Panc1 (cell line): ENCODE measurements at regions of chr20 and their contacts with region 1.

Region 1: GRCh38 chr20:29741894-29742698 is 1515.4 kb upstream of the DEFB115 start:
- DNase-seq: no peak
- ATAC-seq: no peak
- H3K4me3 ChIP-seq: no peak overlapping the region
- H3K27ac ChIP-seq: no peak overlapping the region
- H3K4me1 ChIP-seq: no peaks in the 10 kb centered on the region
- H3K27me3 ChIP-seq: no peaks in the 10 kb centered on the region
- CTCF ChIP-seq: no peak

Region 2: DNA sequence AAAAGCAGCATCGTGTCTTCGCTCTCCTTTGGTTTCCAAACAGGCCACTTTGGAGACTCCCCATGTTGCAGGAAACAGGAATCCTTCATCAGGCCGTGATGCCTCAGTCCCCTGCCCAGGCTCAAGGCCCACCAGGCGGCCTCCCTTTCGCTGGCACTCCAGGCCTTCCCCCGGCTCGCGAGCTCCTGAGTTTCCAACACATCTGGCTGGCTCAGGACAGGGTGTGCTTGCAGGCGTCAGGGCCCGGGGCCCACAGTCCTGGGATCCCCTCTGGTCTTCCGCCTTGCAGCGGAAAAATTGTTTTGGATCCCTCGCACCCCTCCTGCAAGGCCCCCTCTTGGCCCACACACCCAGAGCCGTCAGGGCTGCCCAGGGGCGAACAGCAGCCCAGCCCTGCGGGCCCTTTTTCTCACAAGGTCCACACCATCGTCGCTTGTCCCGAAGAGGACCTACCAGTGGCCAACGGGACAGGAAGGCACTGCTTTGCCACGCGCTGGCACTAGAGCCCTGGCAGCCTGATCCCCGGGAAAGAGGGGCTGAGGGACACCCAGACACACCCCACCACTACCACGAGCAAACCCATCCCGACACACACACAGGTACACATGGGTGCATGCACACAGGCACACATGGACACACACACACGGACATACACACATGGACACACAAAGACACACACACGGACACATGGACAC is 415.6 kb before region 1 on chr20:
- CTCF ChIA-PET with region 1: interaction called, 10 read pairs
- POLR2A ChIA-PET with region 1: no interaction called
- in situ Hi-C with region 1: no loop called
- intact Hi-C with region 1: no loop called
- DNase-seq: no peak
- ATAC-seq: 0 out of 2 replicates have a peak, but pooled peaks have one; percentile 70
- H3K4me3 ChIP-seq: no peak overlapping the region
- H3K27ac ChIP-seq: no peak overlapping the region
- H3K4me1 ChIP-seq: no peaks in the 10 kb centered on the region
- H3K27me3 ChIP-seq: no peaks in the 10 kb centered on the region
- CTCF ChIP-seq: no peak

Region 3: GRCh38 chr20:29472606-29473005 is 269.5 kb before region 1 on chr20:
- CTCF ChIA-PET with region 1: no interaction called
- POLR2A ChIA-PET with region 1: no interaction called
- in situ Hi-C with region 1: no loop called
- intact Hi-C with region 1: no loop called
- DNase-seq: no peak
- ATAC-seq: no peak
- H3K4me3 ChIP-seq: no peak overlapping the region
- H3K27ac ChIP-seq: no peak overlapping the region
- H3K4me1 ChIP-seq: no peaks in the 10 kb centered on the region
- H3K27me3 ChIP-seq: no peaks in the 10 kb centered on the region
- CTCF ChIP-seq: no peak

Region 4: DNA sequence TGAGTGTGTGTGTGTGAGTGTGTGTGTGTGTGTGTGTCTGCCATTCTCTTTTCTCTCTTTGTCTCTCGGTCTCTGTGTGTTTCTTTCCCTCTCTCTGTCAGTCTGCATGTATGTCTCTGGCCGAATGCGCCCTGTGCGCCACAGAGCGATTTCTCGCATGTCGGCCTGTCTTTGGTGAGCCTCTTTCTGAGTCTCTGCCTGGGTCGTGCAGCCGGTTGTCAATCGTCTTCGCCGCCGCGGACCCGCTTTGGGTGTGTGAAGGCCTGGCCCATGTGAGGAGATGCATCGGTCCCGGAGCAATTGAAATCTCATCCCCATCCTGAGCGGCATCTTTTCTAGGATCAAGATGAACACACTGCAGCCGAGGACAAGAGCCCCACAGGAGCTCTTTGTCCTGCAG is 51.8 kb before region 1 on chr20:
- CTCF ChIA-PET with region 1: no interaction called
- POLR2A ChIA-PET with region 1: no interaction called
- in situ Hi-C with region 1: no loop called
- intact Hi-C with region 1: loop called (anchors 5 kb)
- DNase-seq: no peak
- ATAC-seq: no peak
- H3K4me3 ChIP-seq: no peak overlapping the region
- H3K27ac ChIP-seq: no peak overlapping the region
- H3K4me1 ChIP-seq: no peaks in the 10 kb centered on the region
- H3K27me3 ChIP-seq: no peaks in the 10 kb centered on the region
- CTCF ChIP-seq: no peak

Region 5: GRCh38 chr20:29762620-29763019 is 20.5 kb after region 1 on chr20:
- CTCF ChIA-PET with region 1: no interaction called
- POLR2A ChIA-PET with region 1: no interaction called
- in situ Hi-C with region 1: no loop called
- intact Hi-C with region 1: no loop called
- DNase-seq: no peak
- ATAC-seq: no peak
- H3K4me3 ChIP-seq: no peak overlapping the region
- H3K27ac ChIP-seq: no peak overlapping the region
- H3K4me1 ChIP-seq: peaks cover 4% of the 10 kb centered on the region
- H3K27me3 ChIP-seq: no peaks in the 10 kb centered on the region
- CTCF ChIP-seq: no peak

Region 6: GRCh38 chr20:29790510-29790909 is 48.4 kb after region 1 on chr20:
- CTCF ChIA-PET with region 1: no interaction called
- POLR2A ChIA-PET with region 1: no interaction called
- in situ Hi-C with region 1: no loop called
- intact Hi-C with region 1: no loop called
- DNase-seq: no peak
- ATAC-seq: no peak
- H3K4me3 ChIP-seq: no peak overlapping the region
- H3K27ac ChIP-seq: no peak overlapping the region
- H3K4me1 ChIP-seq: no peaks in the 10 kb centered on the region
- H3K27me3 ChIP-seq: no peaks in the 10 kb centered on the region
- CTCF ChIP-seq: no peak

Region 7: GRCh38 chr20:30922129-30922528 is 1180.0 kb after region 1 on chr20:
- CTCF ChIA-PET with region 1: no interaction called
- POLR2A ChIA-PET with region 1: no interaction called
- in situ Hi-C with region 1: no loop called
- intact Hi-C with region 1: loop called (anchors 10 kb)
- DNase-seq: no peak
- ATAC-seq: no peak
- H3K4me3 ChIP-seq: no peak overlapping the region
- H3K27ac ChIP-seq: no peak overlapping the region
- H3K4me1 ChIP-seq: no peaks in the 10 kb centered on the region
- H3K27me3 ChIP-seq: no peaks in the 10 kb centered on the region
- CTCF ChIP-seq: no peak